Activated CD8-positive, alpha-beta T cell treated with anti-CD3 and anti-CD28 coated beads, Interleukin-2, amount 10 ng/mL, durations not matched to agents 7 days and 5 days (primary cell): ENCODE measurements at regions of chr5 and their contacts with region 1.

Region 1: DNA sequence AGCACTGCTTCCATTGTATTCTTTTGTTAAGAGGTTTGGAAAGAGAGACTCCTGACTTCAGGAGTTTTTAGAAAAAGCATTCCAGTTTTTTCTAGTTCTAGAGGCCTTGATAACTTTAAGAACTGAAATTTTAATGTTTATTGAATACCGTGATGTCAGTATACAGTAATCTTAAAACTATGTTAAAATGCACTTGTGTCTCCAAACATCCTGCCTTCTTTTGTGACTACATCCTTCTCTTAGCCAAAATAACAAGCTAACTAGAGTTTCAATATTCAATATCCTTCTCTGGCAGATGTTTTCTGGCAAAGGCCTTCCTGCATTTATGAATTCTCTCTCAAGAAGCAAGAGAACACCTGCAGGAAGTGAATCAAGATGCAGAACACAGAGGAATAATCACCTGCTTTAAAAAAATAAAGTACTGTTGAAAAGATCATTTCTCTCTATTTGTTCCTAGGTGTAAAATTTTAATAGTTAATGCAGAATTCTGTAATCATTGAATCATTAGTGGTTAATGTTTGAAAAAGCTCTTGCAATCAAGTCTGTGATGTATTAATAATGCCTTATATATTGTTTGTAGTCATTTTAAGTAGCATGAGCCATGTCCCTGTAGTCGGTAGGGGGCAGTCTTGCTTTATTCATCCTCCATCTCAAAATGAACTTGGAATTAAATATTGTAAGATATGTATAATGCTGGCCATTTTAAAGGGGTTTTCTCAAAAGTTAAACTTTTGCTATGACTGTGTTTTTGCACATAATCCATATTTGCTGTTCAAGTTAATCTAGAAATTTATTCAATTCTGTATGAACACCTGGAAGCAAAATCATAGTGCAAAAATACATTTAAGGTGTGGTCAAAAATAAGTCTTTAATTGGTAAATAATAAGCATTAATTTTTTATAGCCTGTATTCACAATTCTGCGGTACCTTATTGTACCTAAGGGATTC is 43.1 kb downstream of the NDFIP1 start:
- DNase-seq: peak; percentile 76
- ATAC-seq: peak; percentile 67
- H3K4me3 Mint-ChIP-seq: no peak overlapping the region
- H3K27ac Mint-ChIP-seq: no peak overlapping the region
- H3K4me1 Mint-ChIP-seq: no peaks in the 10 kb centered on the region
- H3K27me3 Mint-ChIP-seq: no peaks in the 10 kb centered on the region

Region 2: GRCh38 chr5:141835928-141836670 is 315.6 kb before region 1 on chr5:
- CTCF ChIA-PET with region 1: no interaction called
- POLR2A ChIA-PET with region 1: no interaction called
- DNase-seq: no peak
- ATAC-seq: no peak
- H3K4me3 Mint-ChIP-seq: no peak overlapping the region
- H3K27ac Mint-ChIP-seq: no peak overlapping the region
- H3K4me1 Mint-ChIP-seq: peaks cover 8% of the 10 kb centered on the region
- H3K27me3 Mint-ChIP-seq: peaks cover 13% of the 10 kb centered on the region

Region 3: DNA sequence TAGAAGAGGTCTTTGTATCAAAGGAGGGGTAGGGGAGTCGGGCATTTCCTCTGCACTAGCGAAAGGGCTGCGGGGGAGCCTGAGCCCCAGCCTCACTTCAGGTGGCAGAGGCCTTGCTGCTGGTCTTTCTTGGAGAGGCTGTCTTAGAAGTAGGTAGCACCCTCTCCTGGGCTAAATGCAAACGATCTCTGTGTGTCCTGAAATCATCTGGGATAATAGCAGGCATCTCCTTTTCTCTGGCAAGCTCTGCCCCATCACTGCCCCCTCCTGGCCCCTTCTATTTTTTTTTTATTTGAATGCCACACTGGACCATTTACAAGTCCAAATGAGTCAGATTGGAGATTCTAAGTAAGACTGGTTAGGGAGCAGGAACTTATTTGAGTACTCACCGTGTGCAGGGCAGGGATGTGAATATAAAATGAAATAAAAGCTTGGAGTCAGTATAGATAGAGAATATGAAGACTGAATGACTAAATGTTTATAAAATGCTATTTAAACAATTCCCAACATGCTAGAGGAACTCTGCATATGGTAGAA is 397.1 kb after region 1 on chr5:
- CTCF ChIA-PET with region 1: interaction called, 12 read pairs
- POLR2A ChIA-PET with region 1: no interaction called
- DNase-seq: peak; percentile 22
- ATAC-seq: peak; percentile 47
- H3K4me3 Mint-ChIP-seq: no peak overlapping the region
- H3K27ac Mint-ChIP-seq: no peak overlapping the region
- H3K4me1 Mint-ChIP-seq: peaks cover 1% of the 10 kb centered on the region
- H3K27me3 Mint-ChIP-seq: peaks cover 38% of the 10 kb centered on the region

Region 4: DNA sequence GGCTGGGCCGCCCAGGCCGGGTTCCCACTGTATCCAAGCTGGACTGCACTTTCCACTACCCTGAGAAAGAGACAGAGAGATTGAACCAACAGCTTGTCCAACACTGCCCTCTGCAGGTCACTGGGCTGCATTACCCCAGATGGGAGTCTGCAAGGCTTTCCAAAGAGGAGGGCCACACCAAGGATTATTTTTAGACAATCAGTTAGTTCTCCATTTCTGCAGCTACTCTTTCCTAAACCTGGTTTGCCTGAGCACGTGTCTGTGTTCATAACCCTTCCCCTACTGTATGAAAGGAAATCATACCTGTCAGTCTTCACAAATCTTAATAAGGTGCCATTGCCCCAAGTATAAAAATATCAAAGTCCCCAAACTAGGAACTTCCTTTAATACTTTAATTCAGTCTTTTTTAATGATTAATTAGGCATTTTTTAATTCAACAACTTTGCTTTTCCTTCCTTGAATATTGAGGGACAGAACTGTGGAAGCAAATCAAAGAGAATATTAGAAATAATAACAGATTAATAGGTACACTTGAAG is 547.5 kb after region 1 on chr5:
- CTCF ChIA-PET with region 1: interaction called, 10 read pairs
- POLR2A ChIA-PET with region 1: no interaction called
- DNase-seq: peak; percentile 84
- ATAC-seq: peak; percentile 88
- H3K4me3 Mint-ChIP-seq: no peak overlapping the region
- H3K27ac Mint-ChIP-seq: no peak overlapping the region
- H3K4me1 Mint-ChIP-seq: no peaks in the 10 kb centered on the region
- H3K27me3 Mint-ChIP-seq: peaks cover 21% of the 10 kb centered on the region